ENCODE measurements at regions of chr3 and their contacts with region 1.

Region 1: DNA sequence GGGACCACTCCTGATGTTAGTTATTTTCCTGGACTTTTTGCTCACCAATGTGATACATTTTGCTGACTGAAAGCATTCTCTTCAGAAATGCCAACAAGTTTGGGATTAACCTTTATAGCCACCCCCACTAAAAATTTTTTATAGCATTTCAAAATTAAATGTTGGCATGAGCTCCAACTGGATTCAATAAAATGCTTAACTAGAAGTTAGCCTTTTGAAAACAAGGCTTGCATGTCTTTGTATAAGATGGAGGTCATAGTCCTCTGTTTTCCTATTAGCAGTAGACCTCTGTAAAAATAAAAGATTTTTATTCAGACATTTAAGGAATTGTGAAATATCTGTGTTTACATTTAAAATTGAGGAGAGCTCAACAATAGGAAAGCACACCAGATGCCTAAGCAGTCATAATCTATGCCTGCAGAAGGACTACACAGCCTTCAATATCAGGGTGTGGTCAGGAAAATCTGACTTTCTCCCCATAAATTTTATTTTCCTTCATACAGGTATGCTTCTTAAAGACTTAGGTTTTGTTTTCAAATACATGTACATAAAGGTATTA is 87.2 kb downstream of the DNAJC13 start:
- DNase-seq: no peak
- H3K4me3 ChIP-seq: no peak overlapping the region
- H3K27ac ChIP-seq: no peak overlapping the region
- H3K4me1 ChIP-seq: no peaks in the 10 kb centered on the region
- H3K27me3 ChIP-seq: no peaks in the 10 kb centered on the region
- CTCF ChIP-seq: no peak

Region 2: GRCh38 chr3:132180337-132180791 is 324.1 kb before region 1 on chr3:
- CTCF ChIA-PET with region 1: no interaction called
- dilution Hi-C with region 1: no loop called
- in situ Hi-C with region 1: no loop called
- intact Hi-C with region 1: no loop called
- DNase-seq: peak; percentile 63
- H3K4me3 ChIP-seq: no peak overlapping the region
- H3K27ac ChIP-seq: no peak overlapping the region
- H3K4me1 ChIP-seq: no peaks in the 10 kb centered on the region
- H3K27me3 ChIP-seq: no peaks in the 10 kb centered on the region
- CTCF ChIP-seq: peak; percentile 43 to 72

Region 3: GRCh38 chr3:132253262-132253878 is 251.1 kb before region 1 on chr3:
- CTCF ChIA-PET with region 1: no interaction called
- dilution Hi-C with region 1: no loop called
- in situ Hi-C with region 1: no loop called
- intact Hi-C with region 1: no loop called
- DNase-seq: peak; percentile 47
- H3K4me3 ChIP-seq: no peak overlapping the region
- H3K27ac ChIP-seq: no peak overlapping the region
- H3K4me1 ChIP-seq: peaks cover 7% of the 10 kb centered on the region
- H3K27me3 ChIP-seq: no peaks in the 10 kb centered on the region
- CTCF ChIP-seq: peak; percentile 77 to 78

Region 4: GRCh38 chr3:132464066-132464465 is 40.4 kb before region 1 on chr3:
- CTCF ChIA-PET with region 1: no interaction called
- dilution Hi-C with region 1: no loop called
- in situ Hi-C with region 1: no loop called
- intact Hi-C with region 1: loop called (anchors 5 kb)
- DNase-seq: no peak
- H3K4me3 ChIP-seq: no peak overlapping the region
- H3K27ac ChIP-seq: no peak overlapping the region
- H3K4me1 ChIP-seq: peaks cover 4% of the 10 kb centered on the region
- H3K27me3 ChIP-seq: no peaks in the 10 kb centered on the region
- CTCF ChIP-seq: no peak

Region 5: DNA sequence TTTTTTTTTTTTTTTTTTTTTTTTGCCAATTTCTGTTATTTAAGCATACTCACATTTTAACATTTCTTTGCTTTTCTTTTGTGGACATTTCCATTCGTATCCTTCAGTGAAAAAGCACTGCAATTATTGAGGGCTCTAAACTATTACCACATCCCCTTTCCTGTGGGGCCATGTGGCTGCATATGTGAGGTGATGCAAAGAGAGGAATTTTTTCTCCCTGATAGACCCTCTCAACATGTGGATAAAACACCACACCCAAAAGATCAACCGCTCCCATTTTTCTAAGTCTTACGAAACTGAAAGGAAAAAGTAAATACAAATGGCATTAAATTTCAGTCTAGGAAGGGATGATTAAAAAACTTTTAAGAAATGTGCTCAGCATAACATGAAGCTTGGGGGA is 18.4 kb before region 1 on chr3:
- CTCF ChIA-PET with region 1: no interaction called
- dilution Hi-C with region 1: no loop called
- in situ Hi-C with region 1: no loop called
- intact Hi-C with region 1: loop called (anchors 2 kb)
- DNase-seq: no peak
- H3K4me3 ChIP-seq: no peak overlapping the region
- H3K27ac ChIP-seq: no peak overlapping the region
- H3K4me1 ChIP-seq: no peaks in the 10 kb centered on the region
- H3K27me3 ChIP-seq: no peaks in the 10 kb centered on the region
- CTCF ChIP-seq: no peak

Measured in mammary epithelial cell (primary cell).